ENCODE measurements at regions of chr7 and their contacts with region 1.

Region 1: GRCh38 chr7:118352854-118353453 is 128.4 kb downstream of the ANKRD7 start:
- DNase-seq: no peak
- ATAC-seq: peak in 1 of 4 donors; percentile 63
- H3K4me3 ChIP-seq: no peak overlapping the region
- H3K27ac ChIP-seq: no peak overlapping the region
- H3K4me1 ChIP-seq: no peaks in the 10 kb centered on the region
- H3K27me3 ChIP-seq: no peaks in the 10 kb centered on the region
- CTCF ChIP-seq: peak; percentile 43

Region 2: GRCh38 chr7:118389629-118390028 is 36.7 kb after region 1 on chr7:
- intact Hi-C with region 1: no loop called
- DNase-seq: no peak
- ATAC-seq: no peak
- H3K4me3 ChIP-seq: no peak overlapping the region
- H3K27ac ChIP-seq: no peak overlapping the region
- H3K4me1 ChIP-seq: no peaks in the 10 kb centered on the region
- H3K27me3 ChIP-seq: no peaks in the 10 kb centered on the region
- CTCF ChIP-seq: no peak

Region 3: DNA sequence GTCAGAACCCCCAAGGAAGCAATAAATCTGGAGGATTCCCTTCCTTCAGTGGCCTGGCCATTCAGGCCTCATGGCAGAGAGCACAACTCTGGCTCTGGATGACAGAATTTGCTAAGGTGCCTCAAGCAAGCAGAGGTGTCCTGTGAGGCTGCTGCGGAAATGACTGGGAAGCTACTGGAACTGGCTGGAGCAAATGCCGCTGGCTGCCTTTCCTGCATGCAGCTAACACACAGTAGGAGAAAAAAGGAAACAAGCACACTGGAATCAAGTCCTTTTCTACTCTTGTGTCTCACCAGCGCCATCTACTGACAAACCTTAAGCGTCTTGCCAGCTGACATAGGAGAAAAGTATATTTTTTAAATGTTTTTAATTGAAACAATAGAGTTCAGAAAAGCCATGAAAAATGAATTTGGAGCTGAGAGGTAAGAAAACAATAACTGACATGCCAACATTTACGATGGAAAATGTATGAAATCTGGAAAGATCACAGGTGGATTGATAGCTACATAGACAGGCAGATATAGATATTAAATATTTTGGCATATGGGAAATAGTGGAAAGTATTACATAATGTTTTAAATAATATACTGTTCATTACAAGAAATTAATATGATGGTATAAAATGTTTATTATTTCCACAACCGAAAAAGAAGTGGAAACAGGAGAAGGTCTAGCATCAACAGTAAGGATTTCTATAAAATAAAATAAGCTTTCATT is 823.1 kb after region 1 on chr7:
- intact Hi-C with region 1: loop called (anchors 5 kb)
- DNase-seq: no peak
- ATAC-seq: no peak
- H3K4me3 ChIP-seq: no peak overlapping the region
- H3K27ac ChIP-seq: no peak overlapping the region
- H3K4me1 ChIP-seq: no peaks in the 10 kb centered on the region
- H3K27me3 ChIP-seq: peaks cover 0 to 2% (median 0%) of the 10 kb centered on the region in 3 donors
- CTCF ChIP-seq: peak; percentile 60

Measured in psoas muscle (tissue), 8 donors.